ENCODE measurements at regions of chr12 and their contacts with region 1.

Region 1: DNA sequence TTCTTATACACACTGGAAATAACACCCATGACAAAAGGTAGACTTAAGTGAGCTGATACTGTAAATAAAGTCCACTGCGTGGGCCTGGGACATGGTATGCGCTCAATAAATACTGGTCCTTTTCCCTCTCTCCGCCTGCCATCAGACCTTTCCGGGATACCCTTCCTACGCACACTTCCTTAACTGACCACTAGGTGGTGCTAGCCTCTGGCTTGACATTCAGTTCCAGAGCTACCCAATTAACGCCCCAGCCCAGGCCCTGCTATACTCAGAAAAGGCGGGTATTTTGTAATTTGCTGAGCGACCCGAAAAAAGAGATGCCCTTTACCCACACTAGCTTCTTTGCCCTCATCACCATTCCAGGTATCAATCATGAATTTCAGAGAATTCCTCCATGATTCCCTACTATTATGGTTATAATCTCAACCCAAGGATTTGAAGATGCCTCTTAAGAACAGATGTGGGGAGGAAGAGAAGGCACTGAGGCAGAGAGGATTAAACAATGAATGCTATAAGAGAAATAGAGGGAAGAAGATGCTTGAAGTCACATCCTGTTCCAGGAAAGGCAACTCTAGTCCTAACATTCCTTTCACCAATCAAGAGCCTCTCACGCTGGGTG is 3.9 kb upstream of the LRP1 start:
- DNase-seq: peak in 1 of 2 donors; percentile 83
- H3K4me3 ChIP-seq: no peak overlapping the region
- H3K27ac ChIP-seq: no peak overlapping the region
- H3K4me1 ChIP-seq: peaks cover 18% of the 10 kb centered on the region
- H3K27me3 ChIP-seq: no peaks in the 10 kb centered on the region
- CTCF ChIP-seq: peak; percentile 89 to 97 (median 96)
- POLR2A ChIP-seq: no peak

Region 2: DNA sequence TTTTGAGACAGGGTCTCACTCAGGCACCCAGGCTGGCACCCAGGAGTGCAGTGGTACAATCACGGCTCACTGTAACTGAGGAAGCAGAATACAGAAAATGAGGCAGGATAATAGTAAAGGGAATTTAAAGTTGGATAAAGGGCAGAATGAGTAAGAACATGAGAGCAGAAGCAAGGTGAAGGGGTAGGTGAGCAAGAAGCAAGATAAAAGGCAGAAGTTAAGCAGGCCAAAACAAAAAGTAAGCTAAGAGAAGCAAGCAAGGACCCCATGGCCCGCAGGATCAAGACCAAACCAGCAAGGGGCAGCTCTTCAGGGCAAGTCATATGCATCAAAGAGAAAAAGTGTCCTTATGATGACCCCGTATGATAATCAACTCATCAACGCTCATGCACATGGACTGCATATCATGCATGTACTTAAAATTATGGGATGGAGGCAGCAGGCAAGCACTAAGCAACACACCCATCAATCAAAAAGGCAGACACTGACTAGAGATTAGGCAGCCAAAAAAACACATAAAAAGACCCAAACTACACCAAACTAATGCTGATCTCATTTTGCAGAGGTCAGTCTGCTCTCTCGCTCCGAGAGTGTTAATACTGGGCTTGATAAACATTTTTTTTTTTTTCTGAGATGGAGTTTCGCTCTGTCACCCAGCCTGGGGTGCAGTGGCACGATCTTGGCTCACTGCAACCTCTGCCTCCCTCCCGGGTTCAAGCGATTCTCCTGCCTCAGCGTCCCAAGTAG is 686.8 kb before region 1 on chr12:
- intact Hi-C with region 1: no loop called
- DNase-seq: no peak
- H3K4me3 ChIP-seq: no peak overlapping the region
- H3K27ac ChIP-seq: no peak overlapping the region
- H3K4me1 ChIP-seq: no peaks in the 10 kb centered on the region
- H3K27me3 ChIP-seq: no peaks in the 10 kb centered on the region
- CTCF ChIP-seq: no peak
- POLR2A ChIP-seq: no peak

Region 3: GRCh38 chr12:57175428-57176138 is 51.2 kb after region 1 on chr12:
- intact Hi-C with region 1: loop called (anchors 2 kb)
- DNase-seq: no peak
- H3K4me3 ChIP-seq: peak overlapping the region in 1 of 2 donors; percentile 9
- H3K27ac ChIP-seq: peak overlapping the region; percentile 69
- H3K4me1 ChIP-seq: peaks cover 63% of the 10 kb centered on the region
- H3K27me3 ChIP-seq: no peaks in the 10 kb centered on the region
- CTCF ChIP-seq: peak; percentile 21 to 81 (median 57)
- POLR2A ChIP-seq: no peak

Region 4: DNA sequence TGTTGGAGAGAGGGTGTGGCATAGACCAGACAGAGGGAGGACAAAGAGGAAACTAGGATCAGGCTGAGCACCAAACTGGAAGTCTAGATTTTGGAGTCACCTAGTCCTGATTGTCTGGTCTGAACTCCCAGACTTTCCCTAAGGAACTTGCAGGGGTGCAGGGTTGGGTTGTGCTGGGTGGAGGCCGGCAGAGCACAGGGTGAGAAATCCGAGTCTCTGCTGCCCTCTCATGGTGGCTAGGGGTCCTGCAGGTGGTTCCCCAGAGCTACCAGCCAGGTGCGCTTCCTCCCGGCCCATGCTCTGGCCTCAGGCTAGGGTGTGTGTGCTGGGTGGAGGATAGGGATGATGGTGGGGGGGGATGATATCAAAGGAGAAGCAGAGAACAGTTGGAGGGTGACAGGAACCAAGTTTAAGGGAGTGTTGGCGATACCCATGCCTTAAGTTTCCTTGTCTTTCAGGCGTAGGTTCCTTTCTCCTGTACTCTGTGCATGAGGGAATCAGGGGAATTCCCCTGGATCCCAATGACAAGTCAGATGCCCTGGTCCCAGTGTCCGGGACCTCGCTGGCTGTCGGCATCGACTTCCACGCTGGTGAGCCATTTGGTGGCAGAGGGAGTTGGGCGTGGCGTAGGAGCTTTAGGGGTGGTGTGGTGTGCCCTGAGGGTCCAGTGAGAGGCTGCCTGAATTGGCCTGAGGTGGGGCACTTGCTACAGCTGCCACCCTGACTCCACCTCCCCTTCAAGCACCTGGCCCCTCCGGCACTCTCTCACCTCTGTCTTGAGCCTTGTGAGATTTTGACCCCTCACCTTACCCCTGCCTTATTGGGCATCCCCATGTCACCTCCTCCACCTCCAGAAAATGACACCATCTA is 58.8 kb after region 1 on chr12:
- intact Hi-C with region 1: loop called (anchors 2 kb)
- DNase-seq: no peak
- H3K4me3 ChIP-seq: no peak overlapping the region
- H3K27ac ChIP-seq: peak overlapping the region; percentile 27
- H3K4me1 ChIP-seq: peaks cover 30% of the 10 kb centered on the region
- H3K27me3 ChIP-seq: no peaks in the 10 kb centered on the region
- CTCF ChIP-seq: peak; percentile 73 to 95 (median 93)
- POLR2A ChIP-seq: no peak

Measured in vagina (tissue), 2 donors.